ENCODE measurements at regions of chr17 and their contacts with region 1.

Region 1: GRCh38 chr17:7484067-7484918 is at the start of gene POLR2A:
- DNase-seq: peak; percentile 97
- total RNA-seq, gene POLR2A: 52.7 and 52.8 TPM in 2 replicates

Region 2: DNA sequence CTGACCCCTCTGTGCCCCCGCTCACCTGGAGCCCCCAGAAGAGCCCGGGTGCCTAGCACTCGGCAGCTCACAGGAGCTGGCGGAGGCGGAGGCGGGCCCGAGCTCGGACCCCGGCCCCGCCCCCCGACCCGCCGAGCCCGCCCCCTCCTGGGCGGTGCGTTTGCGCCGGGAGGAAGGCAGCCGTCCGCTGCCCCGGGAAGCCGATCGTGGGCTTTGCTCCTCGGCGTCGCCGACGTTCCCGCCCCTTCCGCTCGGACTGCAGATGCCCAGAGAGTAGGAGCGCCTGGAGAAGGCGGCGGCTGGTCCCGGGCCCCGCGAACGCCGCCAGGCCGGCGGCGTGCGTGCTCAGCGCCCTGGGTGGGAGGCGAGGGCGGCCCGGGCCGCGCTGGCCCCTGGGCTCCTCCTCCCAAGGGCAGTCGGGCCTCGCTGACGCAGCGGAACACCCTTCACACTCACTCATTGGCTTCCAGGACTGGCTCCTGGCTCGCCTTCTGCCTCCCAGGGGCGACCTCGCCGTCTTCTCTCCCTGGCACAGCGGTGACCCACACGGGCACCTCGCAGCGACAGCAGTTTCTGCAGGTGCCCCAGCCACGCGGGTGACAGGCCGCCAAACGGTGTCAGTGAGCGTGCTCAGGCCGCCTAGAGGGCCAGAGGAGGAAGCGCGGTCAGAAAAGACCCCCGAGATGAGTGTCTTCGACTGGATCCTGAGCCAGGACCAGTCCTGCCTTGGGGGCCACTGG is 89.7 kb before region 1 on chr17 and contains the start of gene PLSCR3:
- in situ Hi-C with region 1: loop called (anchors 25 kb)
- DNase-seq: peak; percentile 82
- total RNA-seq, gene PLSCR3: 7.9 and 8.3 TPM in 2 replicates